ENCODE measurements at regions of chr18 and their contacts with region 1.

Region 1: DNA sequence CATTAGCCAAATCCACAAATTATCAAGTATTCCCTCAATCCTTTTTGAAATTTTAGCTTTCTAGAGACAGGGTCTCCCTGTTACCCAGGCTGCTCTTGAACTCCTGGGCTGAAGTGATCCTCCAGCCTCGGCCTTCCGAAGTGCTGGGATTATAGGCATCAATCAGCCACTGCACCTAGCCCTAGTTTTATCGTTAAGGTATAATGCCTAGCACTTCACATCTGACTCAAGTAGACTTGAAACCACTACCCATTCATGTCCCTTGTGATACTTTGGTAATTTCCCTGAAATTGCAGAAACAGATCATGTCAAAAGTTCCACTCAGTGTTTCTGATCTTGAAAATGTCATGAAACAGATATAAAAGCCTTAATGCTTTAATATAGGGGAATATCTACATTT is 26.3 kb downstream of the MEX3C start:
- DNase-seq: no peak
- ATAC-seq: peak; percentile 78
- H3K4me3 ChIP-seq: no peak overlapping the region
- H3K27ac ChIP-seq: peak overlapping the region; percentile 10
- H3K4me1 ChIP-seq: peaks cover 22% of the 10 kb centered on the region
- H3K27me3 ChIP-seq: no peaks in the 10 kb centered on the region
- CTCF ChIP-seq: no peak
- EP300 ChIP-seq: no peak
- POLR2A ChIP-seq: no peak
- RAD21 ChIP-seq: no peak

Region 2: DNA sequence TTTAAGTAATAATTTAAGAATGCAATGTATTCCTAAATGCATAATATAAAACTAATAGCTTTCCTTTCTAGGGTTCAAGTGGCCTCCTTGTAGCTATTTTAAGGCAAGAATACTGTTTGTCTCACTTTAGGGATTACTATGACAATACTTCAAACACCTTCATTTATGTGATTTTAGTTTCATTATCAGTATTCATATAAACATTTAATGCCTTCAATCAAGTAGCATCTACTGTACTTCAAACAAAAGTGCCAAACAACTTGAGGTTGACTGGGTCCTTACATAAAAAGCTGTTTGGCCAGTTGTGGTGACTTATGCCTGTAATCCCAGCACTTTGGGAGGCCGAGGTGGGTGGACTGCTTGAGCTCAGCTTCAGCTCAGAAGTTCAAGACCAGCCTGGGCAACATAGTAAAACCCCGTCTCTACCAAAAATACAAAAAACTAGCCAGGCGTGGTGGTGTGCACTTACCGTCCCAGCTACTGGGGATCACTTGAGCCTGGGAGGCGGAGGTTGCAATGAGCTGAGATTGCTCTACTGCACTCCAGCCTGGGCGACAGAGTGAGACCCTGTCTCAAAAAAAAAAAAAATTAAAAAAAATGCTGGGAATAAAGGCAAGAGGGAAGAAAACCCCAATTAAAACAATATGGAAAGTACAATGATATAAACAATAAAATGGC is 16.9 kb after region 1 on chr18:
- CTCF ChIA-PET with region 1: interaction called, 10 read pairs
- POLR2A ChIA-PET with region 1: interaction called, 4 read pairs
- RAD21 ChIA-PET with region 1: no interaction called
- SMC1A ChIA-PET with region 1: interaction called, 10 read pairs
- in situ Hi-C with region 1: no loop called
- intact Hi-C with region 1: no loop called
- DNase-seq: no peak
- ATAC-seq: peak; percentile 49
- H3K4me3 ChIP-seq: peak overlapping the region; percentile 23
- H3K27ac ChIP-seq: peak overlapping the region; percentile 64
- H3K4me1 ChIP-seq: peaks cover 31% of the 10 kb centered on the region
- H3K27me3 ChIP-seq: no peaks in the 10 kb centered on the region
- CTCF ChIP-seq: no peak
- EP300 ChIP-seq: no peak
- POLR2A ChIP-seq: no peak
- RAD21 ChIP-seq: no peak

Region 3: DNA sequence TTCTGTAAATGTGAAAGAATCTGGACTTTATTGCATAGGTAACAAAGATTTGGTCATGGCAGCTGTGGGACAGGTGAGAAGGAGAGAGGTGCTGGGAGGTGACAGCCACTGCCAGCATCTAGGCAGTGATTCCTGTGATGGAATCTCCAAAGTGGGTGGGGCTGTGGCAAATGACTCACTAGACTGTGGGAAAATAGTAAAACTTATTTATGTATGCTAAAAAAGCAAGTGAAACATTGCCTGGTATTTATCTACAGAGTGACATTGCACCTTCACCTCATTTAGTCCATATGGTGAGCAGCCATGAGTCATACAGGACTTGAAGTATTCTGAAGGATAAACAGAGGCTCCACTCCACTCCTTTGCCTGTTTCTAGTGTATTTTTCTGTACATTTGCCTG is 171.6 kb after region 1 on chr18:
- CTCF ChIA-PET with region 1: no interaction called
- POLR2A ChIA-PET with region 1: no interaction called
- RAD21 ChIA-PET with region 1: no interaction called
- SMC1A ChIA-PET with region 1: no interaction called
- in situ Hi-C with region 1: no loop called
- intact Hi-C with region 1: no loop called
- DNase-seq: no peak
- ATAC-seq: no peak
- H3K4me3 ChIP-seq: no peak overlapping the region
- H3K27ac ChIP-seq: no peak overlapping the region
- H3K4me1 ChIP-seq: no peaks in the 10 kb centered on the region
- H3K27me3 ChIP-seq: no peaks in the 10 kb centered on the region
- CTCF ChIP-seq: no peak
- EP300 ChIP-seq: no peak
- POLR2A ChIP-seq: no peak
- RAD21 ChIP-seq: no peak